Gastrocnemius medialis (tissue), 4 donors: ENCODE measurements at regions of chr19 and their contacts with region 1.

Region 1: GRCh38 chr19:13794757-13795589 is at the start of gene ZSWIM4:
- DNase-seq: peak; percentile 99
- ATAC-seq: peak; percentile 95 to 96
- H3K4me3 ChIP-seq: peak within 1 kb of the TSS; percentile 64 to 96 (median 78)
- H3K27ac ChIP-seq: peak within 1 kb of the TSS; percentile 79 to 96 (median 90)
- H3K4me1 ChIP-seq: peaks cover 24 to 26% of the 10 kb centered on the region in 2 donors
- H3K27me3 ChIP-seq: no peaks in the 10 kb centered on the region
- CTCF ChIP-seq: no peak
- POLR2A ChIP-seq: peak; percentile 57 to 84
- total RNA-seq, gene ZSWIM4: 3.9 to 6.3 (median 5.0) TPM

Region 2: GRCh38 chr19:13748169-13748828 is 46.7 kb before region 1 on chr19:
- in situ Hi-C with region 1: no loop called
- intact Hi-C with region 1: no loop called
- DNase-seq: no peak
- ATAC-seq: peak in 1 of 2 donors; percentile 1
- H3K4me3 ChIP-seq: peak overlapping the region; percentile 58 to 99 (median 90)
- H3K27ac ChIP-seq: peak overlapping the region; percentile 86 to 95 (median 90)
- H3K4me1 ChIP-seq: peaks cover 12 to 14% of the 10 kb centered on the region in 2 donors
- H3K27me3 ChIP-seq: no peaks in the 10 kb centered on the region
- CTCF ChIP-seq: no peak
- POLR2A ChIP-seq: no peak

Region 3: DNA sequence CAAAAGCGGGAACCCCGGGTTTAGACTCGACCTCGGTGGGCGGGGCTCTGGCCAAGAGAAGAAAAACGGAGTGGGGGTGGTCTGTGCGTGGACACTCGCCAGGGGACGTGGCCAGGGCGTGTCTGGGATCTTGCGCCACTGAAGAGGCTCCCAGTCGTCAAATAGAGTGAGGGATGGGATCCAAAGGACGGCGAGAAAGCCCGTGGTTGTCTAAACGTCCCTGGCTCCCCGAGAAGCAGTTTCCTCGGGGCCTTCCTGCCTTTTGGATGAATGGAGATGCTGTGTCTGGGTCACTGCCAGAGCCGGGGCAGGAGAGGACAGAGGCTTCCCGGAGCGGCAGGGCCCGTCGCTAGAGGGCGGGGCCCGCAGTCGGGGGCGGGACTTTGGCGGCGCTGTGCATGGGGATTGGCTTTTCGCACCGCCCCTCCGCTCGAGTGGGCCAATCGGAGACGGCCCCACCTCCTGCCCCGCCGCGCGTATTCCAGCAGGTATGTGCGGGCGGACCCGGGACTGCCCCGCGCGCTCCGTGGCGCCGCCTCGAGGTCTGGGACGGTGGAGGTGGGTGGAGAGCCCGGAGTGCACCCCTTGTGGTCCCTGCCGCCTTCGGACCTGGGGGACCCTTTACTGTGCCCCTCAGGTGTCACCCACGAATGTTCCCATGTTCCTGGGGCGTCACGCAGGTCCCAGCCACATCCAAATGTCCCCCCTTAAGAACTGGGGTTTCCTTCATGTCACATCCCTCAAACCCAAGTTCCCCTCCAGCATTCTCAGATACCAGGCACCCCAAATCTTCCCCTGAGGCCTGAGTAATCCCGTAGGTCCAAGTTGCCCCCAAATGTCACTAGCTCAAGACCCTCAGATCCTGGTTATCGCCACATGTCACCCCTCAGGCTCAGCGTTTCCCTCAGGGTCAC is 38.6 kb after region 1 on chr19:
- in situ Hi-C with region 1: no loop called
- intact Hi-C with region 1: loop called (anchors 2 kb)
- DNase-seq: peak; percentile 91 to 96
- ATAC-seq: peak; percentile 75 to 81
- H3K4me3 ChIP-seq: peak overlapping the region; percentile 14 to 40 (median 19)
- H3K27ac ChIP-seq: peak overlapping the region; percentile 96 to 100 (median 98)
- H3K4me1 ChIP-seq: peaks cover 43 to 55% of the 10 kb centered on the region in 2 donors
- H3K27me3 ChIP-seq: no peaks in the 10 kb centered on the region
- CTCF ChIP-seq: peak; percentile 39 to 62 (median 45)
- POLR2A ChIP-seq: peak in 1 of 2 donors; percentile 41